CD4-positive, alpha-beta memory T cell (primary cell): ENCODE measurements at regions of chr3 and their contacts with region 1.

Region 1: GRCh38 chr3:69200384-69201068 is 78.1 kb upstream of the LMOD3 start:
- DNase-seq: peak; percentile 20 to 47 (median 27)
- H3K4me3 ChIP-seq: peak overlapping the region; percentile 82 to 94
- H3K4me3 Mint-ChIP-seq: peak overlapping the region; percentile 92 to 97 (median 96)
- H3K27ac ChIP-seq: peak overlapping the region; percentile 79
- H3K27ac Mint-ChIP-seq: peak overlapping the region; percentile 94 to 98 (median 97)
- H3K4me1 ChIP-seq: peaks cover 28% of the 10 kb centered on the region
- H3K4me1 Mint-ChIP-seq: peaks cover 29 to 64% (median 43%) of the 10 kb centered on the region in 4 donors
- H3K27me3 ChIP-seq: no peaks in the 10 kb centered on the region
- H3K27me3 Mint-ChIP-seq: no peaks in the 10 kb centered on the region

Region 2: GRCh38 chr3:69120879-69121464 is 79.6 kb before region 1 on chr3:
- CTCF ChIA-PET with region 1: no interaction called
- POLR2A ChIA-PET with region 1: no interaction called
- intact Hi-C with region 1: no loop called
- DNase-seq: peak; percentile 75 to 80 (median 79)
- H3K4me3 ChIP-seq: no peak overlapping the region
- H3K4me3 Mint-ChIP-seq: no peak overlapping the region
- H3K27ac ChIP-seq: no peak overlapping the region
- H3K27ac Mint-ChIP-seq: no peak overlapping the region
- H3K4me1 ChIP-seq: no peaks in the 10 kb centered on the region
- H3K4me1 Mint-ChIP-seq: peaks cover 5% of the 10 kb centered on the region in 4 donors
- H3K27me3 ChIP-seq: no peaks in the 10 kb centered on the region
- H3K27me3 Mint-ChIP-seq: peaks cover 0 to 1% of the 10 kb centered on the region in 2 donors

Region 3: GRCh38 chr3:69144631-69145245 is 55.8 kb before region 1 on chr3:
- CTCF ChIA-PET with region 1: no interaction called
- POLR2A ChIA-PET with region 1: no interaction called
- intact Hi-C with region 1: no loop called
- DNase-seq: no peak
- H3K4me3 ChIP-seq: no peak overlapping the region
- H3K4me3 Mint-ChIP-seq: no peak overlapping the region
- H3K27ac ChIP-seq: no peak overlapping the region
- H3K27ac Mint-ChIP-seq: no peak overlapping the region
- H3K4me1 ChIP-seq: no peaks in the 10 kb centered on the region
- H3K4me1 Mint-ChIP-seq: no peaks in the 10 kb centered on the region
- H3K27me3 ChIP-seq: no peaks in the 10 kb centered on the region
- H3K27me3 Mint-ChIP-seq: peaks cover 0 to 4% of the 10 kb centered on the region in 2 donors

Region 4: GRCh38 chr3:69212411-69213139 is 12.0 kb after region 1 on chr3:
- CTCF ChIA-PET with region 1: interaction called, 4 read pairs
- POLR2A ChIA-PET with region 1: interaction called, 12 read pairs
- intact Hi-C with region 1: loop called (anchors 1 kb)
- DNase-seq: peak in 1 of 5 donors; percentile 10
- H3K4me3 ChIP-seq: no peak overlapping the region
- H3K4me3 Mint-ChIP-seq: peak overlapping the region in 2 of 8 donors; percentile 18 to 54
- H3K27ac ChIP-seq: no peak overlapping the region
- H3K27ac Mint-ChIP-seq: peak overlapping the region in 4 of 7 donors; percentile 16 to 79 (median 70)
- H3K4me1 ChIP-seq: peaks cover 7% of the 10 kb centered on the region
- H3K4me1 Mint-ChIP-seq: peaks cover 8 to 22% (median 17%) of the 10 kb centered on the region in 4 donors
- H3K27me3 ChIP-seq: no peaks in the 10 kb centered on the region
- H3K27me3 Mint-ChIP-seq: no peaks in the 10 kb centered on the region

Region 5: GRCh38 chr3:69236812-69237707 is 36.5 kb after region 1 on chr3:
- CTCF ChIA-PET with region 1: interaction called, 24 read pairs
- POLR2A ChIA-PET with region 1: interaction called, 21 read pairs
- intact Hi-C with region 1: loop called (anchors 1 kb)
- DNase-seq: peak in 1 of 5 donors; percentile 16
- H3K4me3 ChIP-seq: no peak overlapping the region
- H3K4me3 Mint-ChIP-seq: peak overlapping the region; percentile 67 to 89 (median 84)
- H3K27ac ChIP-seq: no peak overlapping the region
- H3K27ac Mint-ChIP-seq: peak overlapping the region; percentile 50 to 95 (median 62)
- H3K4me1 ChIP-seq: peaks cover 31% of the 10 kb centered on the region
- H3K4me1 Mint-ChIP-seq: peaks cover 15 to 29% (median 21%) of the 10 kb centered on the region in 4 donors
- H3K27me3 ChIP-seq: no peaks in the 10 kb centered on the region
- H3K27me3 Mint-ChIP-seq: no peaks in the 10 kb centered on the region